GM13977 (cell line): ENCODE measurements at regions of chr4 and their contacts with region 1.

Region 1: GRCh38 chr4:163494360-163495162 is at the start of gene TMA16:
- DNase-seq: peak; percentile 76
- CTCF ChIP-seq: no peak

Region 2: GRCh38 chr4:162506253-162506652 is 988.3 kb before region 1 on chr4:
- in situ Hi-C with region 1: no loop called
- DNase-seq: no peak
- CTCF ChIP-seq: no peak

Region 3: GRCh38 chr4:163003979-163004378 is 490.6 kb before region 1 on chr4:
- in situ Hi-C with region 1: no loop called
- DNase-seq: no peak
- CTCF ChIP-seq: no peak

Region 4: DNA sequence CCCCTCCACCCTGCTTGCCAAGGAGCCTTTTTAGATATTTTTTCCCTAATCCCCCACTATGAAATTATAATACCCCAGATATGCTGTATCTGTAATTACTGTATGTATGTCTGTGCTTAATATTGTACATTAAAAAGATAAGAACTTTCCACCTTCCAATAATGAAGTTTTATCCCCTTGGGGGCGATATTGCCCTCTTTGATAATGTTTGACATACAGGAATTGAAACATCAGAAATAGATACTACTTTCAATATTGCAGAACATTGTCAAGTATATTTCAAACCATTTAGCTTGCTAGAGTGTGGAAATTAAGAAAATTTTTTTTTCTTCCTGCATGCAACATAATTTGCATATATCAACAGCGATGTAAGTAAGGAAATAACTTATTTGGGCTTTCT is 386.8 kb before region 1 on chr4:
- in situ Hi-C with region 1: loop called (anchors 25 kb)
- DNase-seq: peak; percentile 17
- CTCF ChIP-seq: peak; percentile 49

Region 5: GRCh38 chr4:163350672-163351071 is 143.9 kb before region 1 on chr4:
- in situ Hi-C with region 1: no loop called
- DNase-seq: no peak
- CTCF ChIP-seq: no peak

Region 6: GRCh38 chr4:164383358-164384220 is 889.0 kb after region 1 on chr4:
- in situ Hi-C with region 1: no loop called
- DNase-seq: no peak
- CTCF ChIP-seq: no peak